ENCODE measurements at regions of chr21 and their contacts with region 1.

Region 1: DNA sequence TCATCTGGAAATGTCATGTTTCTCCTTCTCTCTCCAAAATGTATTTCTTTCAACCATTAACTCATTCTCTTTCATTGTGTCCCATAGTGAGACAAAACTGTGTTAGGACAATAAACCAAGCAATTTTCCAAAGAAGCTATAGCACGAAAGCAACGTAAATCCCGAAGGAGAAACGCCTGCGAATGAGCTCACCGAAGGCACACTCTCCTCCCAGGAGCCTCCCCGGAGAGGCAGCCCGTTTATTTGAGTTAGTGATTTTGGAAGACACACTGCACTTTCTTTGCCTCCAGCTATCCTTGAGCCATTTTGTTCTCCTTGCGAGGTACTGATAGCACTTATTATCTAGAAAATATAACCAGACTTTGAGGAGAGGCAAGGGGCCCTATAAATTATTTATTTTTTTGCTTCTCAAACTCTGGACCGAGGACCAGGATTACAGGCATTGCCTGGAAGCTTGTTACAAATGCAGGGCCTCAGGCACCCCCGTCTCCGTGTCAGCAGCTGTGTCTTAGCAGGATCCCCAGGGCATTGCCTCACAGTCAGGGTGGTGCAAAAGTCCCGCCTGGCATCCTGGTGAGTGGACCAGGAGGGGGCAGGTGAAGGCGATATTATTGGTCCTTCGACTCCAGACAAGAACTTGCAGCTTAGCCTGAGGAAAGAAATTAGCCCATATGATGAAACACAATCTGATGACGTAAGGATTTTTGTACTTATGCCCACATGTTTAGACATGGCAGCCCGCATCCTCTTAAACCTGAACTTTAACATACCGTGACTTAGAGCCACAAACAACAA is 41.0 kb downstream of the RSPH1 start:
- DNase-seq: no peak
- ATAC-seq: no peak
- H3K4me3 ChIP-seq: no peak overlapping the region
- H3K27ac ChIP-seq: no peak overlapping the region
- H3K4me1 ChIP-seq: no peaks in the 10 kb centered on the region; the same call in 1 of the 2 replicates
- H3K27me3 ChIP-seq: no peaks in the 10 kb centered on the region
- CTCF ChIP-seq: no peak

Region 2: GRCh38 chr21:42145569-42146272 is 309.3 kb before region 1 on chr21:
- CTCF ChIA-PET with region 1: no interaction called
- POLR2A ChIA-PET with region 1: no interaction called
- intact Hi-C with region 1: loop called (anchors 1 kb)
- DNase-seq: peak; percentile 77
- ATAC-seq: peak; percentile 92
- H3K4me3 ChIP-seq: no peak overlapping the region
- H3K27ac ChIP-seq: no peak overlapping the region
- H3K4me1 ChIP-seq: no peaks in the 10 kb centered on the region
- H3K27me3 ChIP-seq: no peaks in the 10 kb centered on the region
- CTCF ChIP-seq: peak; percentile 95

Region 3: GRCh38 chr21:42337830-42338728 is 116.9 kb before region 1 on chr21:
- CTCF ChIA-PET with region 1: no interaction called
- POLR2A ChIA-PET with region 1: no interaction called
- intact Hi-C with region 1: loop called (anchors 1 kb)
- DNase-seq: peak; percentile 95
- ATAC-seq: peak; percentile 92
- H3K4me3 ChIP-seq: peak overlapping the region; percentile 41
- H3K27ac ChIP-seq: peak overlapping the region; percentile 94
- H3K4me1 ChIP-seq: peaks cover 15% of the 10 kb centered on the region
- H3K27me3 ChIP-seq: no peaks in the 10 kb centered on the region
- CTCF ChIP-seq: peak; percentile 92

Region 4: DNA sequence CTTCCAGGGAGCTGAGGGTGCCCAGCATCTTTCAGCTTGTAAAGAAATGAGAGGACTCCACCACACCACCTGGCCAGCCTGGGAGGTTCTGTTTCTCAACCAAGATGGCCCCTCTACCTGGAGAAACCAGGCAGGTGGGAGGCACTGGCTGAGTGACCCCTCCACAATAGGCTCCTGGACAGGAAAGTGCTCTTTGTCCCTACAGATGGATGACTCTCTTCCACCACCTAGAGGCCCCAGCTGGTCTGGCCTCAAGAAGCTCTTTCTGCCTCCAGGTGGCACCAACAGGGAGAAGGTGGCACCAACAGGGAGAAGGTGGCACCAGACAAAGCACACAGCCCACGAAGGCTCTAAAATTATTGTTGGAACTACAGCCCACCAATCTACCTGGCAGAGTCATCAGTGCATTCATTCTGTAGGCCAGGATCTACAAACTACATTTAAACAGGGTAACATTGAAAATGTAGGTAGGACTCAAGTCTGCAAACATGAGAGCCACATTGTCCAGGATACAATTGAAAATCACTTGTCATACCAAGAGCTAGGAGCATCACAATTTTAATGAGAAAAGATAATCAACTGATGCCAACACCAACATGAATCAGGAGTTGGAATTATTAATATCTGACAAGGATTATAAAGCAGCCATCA is 73.5 kb before region 1 on chr21:
- CTCF ChIA-PET with region 1: no interaction called
- POLR2A ChIA-PET with region 1: no interaction called
- intact Hi-C with region 1: loop called (anchors 1 kb)
- DNase-seq: peak; percentile 77
- ATAC-seq: peak; percentile 79
- H3K4me3 ChIP-seq: no peak overlapping the region
- H3K27ac ChIP-seq: peak overlapping the region; percentile 10; the same call in 1 of the 2 replicates
- H3K4me1 ChIP-seq: peaks cover 13% of the 10 kb centered on the region
- H3K27me3 ChIP-seq: no peaks in the 10 kb centered on the region
- CTCF ChIP-seq: peak; percentile 98

Region 5: DNA sequence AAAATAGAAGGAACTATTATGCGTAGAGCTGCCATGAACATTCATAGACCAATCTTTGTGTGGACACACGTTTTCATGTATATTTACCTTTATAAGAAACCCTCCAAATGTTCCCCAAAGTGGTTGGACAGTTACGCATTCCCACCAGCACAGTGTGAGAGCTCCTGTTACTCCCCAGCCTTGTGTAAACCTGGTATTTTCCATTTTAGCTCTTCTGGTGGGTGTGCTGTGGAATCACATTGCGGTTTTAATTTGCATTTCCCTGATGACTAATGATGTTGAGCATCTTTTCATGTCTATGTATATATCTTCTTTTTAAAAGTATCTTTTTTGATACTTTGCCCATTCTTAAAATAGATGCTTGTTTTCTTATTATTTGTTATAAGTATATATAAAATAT is 54.5 kb before region 1 on chr21:
- CTCF ChIA-PET with region 1: no interaction called
- POLR2A ChIA-PET with region 1: no interaction called
- intact Hi-C with region 1: loop called (anchors 1 kb)
- DNase-seq: peak; percentile 23
- ATAC-seq: peak; percentile 32
- H3K4me3 ChIP-seq: no peak overlapping the region
- H3K27ac ChIP-seq: no peak overlapping the region
- H3K4me1 ChIP-seq: peaks cover 19% of the 10 kb centered on the region
- H3K27me3 ChIP-seq: no peaks in the 10 kb centered on the region
- CTCF ChIP-seq: no peak